HEK293 (cell line): ENCODE measurements at regions of chr11 and their contacts with region 1.

Region 1: GRCh38 chr11:60363542-60364510 is 14.5 kb upstream of the MS4A7 start:
- H3K4me3 ChIP-seq: no peak overlapping the region
- H3K27ac ChIP-seq: no peak overlapping the region
- H3K4me1 ChIP-seq: no peaks in the 10 kb centered on the region
- CTCF ChIP-seq: no peak

Region 2: GRCh38 chr11:60252213-60253108 is 111.4 kb before region 1 on chr11:
- CTCF ChIA-PET with region 1: no interaction called
- POLR2A ChIA-PET with region 1: no interaction called
- H3K4me3 ChIP-seq: no peak overlapping the region
- H3K27ac ChIP-seq: no peak overlapping the region
- H3K4me1 ChIP-seq: no peaks in the 10 kb centered on the region
- CTCF ChIP-seq: no peak

Region 3: DNA sequence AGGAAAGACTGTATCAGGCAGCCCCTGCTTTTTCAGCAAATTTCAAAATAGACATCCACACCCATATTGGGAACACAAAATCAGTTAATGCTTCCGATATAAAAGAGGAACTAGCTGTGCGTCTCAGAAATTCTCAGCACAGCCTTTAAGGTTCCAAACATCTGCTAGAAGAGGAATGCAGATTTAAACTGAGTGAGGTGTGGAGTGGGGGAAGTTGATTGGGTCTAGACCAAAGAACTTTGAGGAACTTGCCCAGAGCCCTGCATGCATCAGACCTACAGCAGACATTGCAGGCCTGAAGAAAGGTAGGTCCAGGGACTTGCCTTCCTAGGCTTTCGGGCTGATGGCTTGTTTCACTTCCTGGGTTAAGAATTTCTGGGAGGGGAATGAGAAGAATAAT is 83.4 kb before region 1 on chr11 and contains the start of gene MS4A4A:
- CTCF ChIA-PET with region 1: no interaction called
- POLR2A ChIA-PET with region 1: no interaction called
- H3K4me3 ChIP-seq: no peak within 1 kb of the TSS
- H3K27ac ChIP-seq: no peak within 1 kb of the TSS
- H3K4me1 ChIP-seq: no peaks in the 10 kb centered on the region
- CTCF ChIP-seq: no peak

Region 4: DNA sequence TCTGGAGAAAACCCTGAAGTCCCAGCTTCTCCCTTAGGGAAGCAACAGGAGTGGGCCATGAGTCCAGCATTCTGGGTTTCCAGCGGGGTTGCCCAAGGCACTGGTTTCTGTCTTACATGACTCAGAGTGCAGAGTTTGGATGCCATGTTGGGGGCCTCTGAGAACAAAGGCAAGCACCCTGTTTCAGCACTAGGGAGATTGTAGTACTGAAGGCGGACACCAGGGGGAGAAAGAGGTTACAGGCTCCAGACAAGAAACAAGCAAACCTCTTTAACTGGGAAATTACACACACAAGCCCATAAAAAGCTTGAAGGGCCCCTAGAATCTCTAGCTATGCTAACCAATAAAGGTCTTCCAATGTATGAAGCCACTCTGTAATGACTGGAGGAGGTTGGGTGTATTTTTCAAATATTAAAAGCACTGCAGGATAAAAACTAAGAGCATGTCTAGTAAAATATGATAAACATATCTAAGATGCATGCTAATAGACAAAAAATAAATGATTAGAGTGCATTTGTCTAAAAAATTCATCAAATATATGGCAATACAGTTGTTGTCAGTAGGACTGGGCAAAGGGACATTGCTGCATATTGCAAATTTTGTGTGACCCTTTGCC is 29.7 kb before region 1 on chr11:
- CTCF ChIA-PET with region 1: interaction called, 14 read pairs
- POLR2A ChIA-PET with region 1: no interaction called
- H3K4me3 ChIP-seq: no peak overlapping the region
- H3K27ac ChIP-seq: no peak overlapping the region
- H3K4me1 ChIP-seq: no peaks in the 10 kb centered on the region
- CTCF ChIP-seq: no peak

Region 5: DNA sequence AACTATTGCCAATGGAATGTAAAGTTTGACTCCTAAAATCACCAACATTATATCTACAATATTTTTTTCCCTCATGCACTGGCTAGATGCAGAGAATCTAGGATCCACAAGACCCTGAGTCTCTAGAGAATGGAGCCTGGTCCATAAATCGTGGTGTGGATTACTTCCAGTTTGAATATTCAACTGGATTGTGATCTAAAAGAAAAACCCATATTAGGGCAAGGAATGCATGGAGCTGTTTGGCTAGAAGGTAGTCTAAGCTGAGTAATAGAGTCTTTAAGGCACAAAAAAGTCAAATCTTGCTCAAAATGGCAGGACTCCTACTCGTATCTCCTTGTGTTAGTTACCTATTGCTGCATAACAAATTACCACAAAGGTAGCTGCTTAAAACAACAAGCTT is 56.2 kb after region 1 on chr11:
- CTCF ChIA-PET with region 1: no interaction called
- POLR2A ChIA-PET with region 1: no interaction called
- H3K4me3 ChIP-seq: no peak overlapping the region
- H3K27ac ChIP-seq: no peak overlapping the region
- H3K4me1 ChIP-seq: no peaks in the 10 kb centered on the region
- CTCF ChIP-seq: no peak

Region 6: DNA sequence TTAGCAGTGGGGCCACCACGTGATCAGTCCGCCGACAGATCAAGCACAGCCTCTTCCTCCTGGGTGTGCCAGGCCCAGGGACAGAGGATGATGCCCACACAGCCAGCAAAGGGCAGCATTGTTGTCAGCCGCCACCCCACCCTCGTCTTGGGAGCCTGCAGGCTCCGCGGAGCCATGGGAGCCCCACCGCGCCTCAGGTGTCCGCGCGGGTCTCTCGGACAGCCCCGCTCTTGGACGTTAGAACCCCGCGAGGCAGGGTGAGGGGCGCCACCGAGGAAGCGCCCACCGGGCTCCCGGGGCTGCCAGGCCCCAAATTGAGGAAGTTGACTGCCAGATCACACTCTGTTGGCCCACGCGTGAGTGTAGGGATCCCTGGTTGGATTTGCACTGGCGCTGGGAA is 251.7 kb after region 1 on chr11:
- CTCF ChIA-PET with region 1: interaction called, 25 read pairs
- POLR2A ChIA-PET with region 1: no interaction called
- H3K4me3 ChIP-seq: no peak overlapping the region
- H3K27ac ChIP-seq: no peak overlapping the region
- H3K4me1 ChIP-seq: no peaks in the 10 kb centered on the region
- CTCF ChIP-seq: no peak